ENCODE measurements at regions of chr4 and their contacts with region 1.

Region 1: DNA sequence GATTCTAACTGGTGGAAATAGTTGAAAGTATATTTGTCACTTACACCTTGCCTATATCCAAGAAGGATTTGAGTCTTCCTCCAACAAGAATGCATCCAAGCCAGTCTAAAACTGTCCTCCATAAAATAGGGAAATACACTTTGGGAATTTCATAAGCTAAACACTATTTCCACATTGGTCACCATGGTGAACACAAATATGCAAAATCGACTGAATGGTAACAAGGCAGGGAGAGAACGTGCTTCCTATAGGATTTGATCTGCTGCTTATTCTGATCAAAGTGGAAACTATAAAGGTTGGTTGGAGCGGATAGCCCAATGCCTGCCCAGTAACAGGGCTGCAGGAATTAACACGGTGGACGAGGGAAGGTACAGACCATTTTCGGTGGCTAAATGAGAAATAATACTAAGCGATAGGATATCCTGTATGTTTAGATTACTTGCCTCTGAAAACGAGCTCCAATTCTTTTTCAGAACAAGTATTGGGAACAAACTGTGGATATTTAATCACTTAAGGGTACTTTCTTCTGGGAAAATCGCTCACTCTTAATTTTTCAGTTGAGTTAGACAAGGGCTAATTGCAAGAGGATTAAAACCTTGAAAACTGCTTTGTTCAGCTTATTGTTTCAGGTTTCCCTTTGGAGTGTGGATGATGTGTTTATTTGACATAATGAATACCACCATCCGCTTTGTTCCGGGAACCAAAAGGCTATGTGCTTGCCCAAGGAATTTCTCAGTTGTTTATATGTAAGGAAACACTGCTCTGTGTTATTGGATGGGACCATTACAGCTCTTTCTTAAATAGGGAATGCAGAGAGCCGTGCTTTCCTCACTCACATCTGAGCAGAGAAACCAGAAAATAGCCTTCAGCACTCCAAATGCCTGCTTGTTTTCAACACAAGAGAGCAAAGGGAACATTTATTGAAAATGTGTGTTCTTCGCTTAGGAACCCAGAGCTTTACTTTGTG is 194.4 kb downstream of the CBR4 start:
- DNase-seq: no peak
- H3K4me3 ChIP-seq: peak overlapping the region in 1 of 2 donors; percentile 18
- H3K27ac ChIP-seq: peak overlapping the region; percentile 89 to 92
- H3K4me1 ChIP-seq: no peaks in the 10 kb centered on the region
- H3K27me3 ChIP-seq: no peaks in the 10 kb centered on the region
- CTCF ChIP-seq: no peak
- POLR2A ChIP-seq: no peak

Region 2: DNA sequence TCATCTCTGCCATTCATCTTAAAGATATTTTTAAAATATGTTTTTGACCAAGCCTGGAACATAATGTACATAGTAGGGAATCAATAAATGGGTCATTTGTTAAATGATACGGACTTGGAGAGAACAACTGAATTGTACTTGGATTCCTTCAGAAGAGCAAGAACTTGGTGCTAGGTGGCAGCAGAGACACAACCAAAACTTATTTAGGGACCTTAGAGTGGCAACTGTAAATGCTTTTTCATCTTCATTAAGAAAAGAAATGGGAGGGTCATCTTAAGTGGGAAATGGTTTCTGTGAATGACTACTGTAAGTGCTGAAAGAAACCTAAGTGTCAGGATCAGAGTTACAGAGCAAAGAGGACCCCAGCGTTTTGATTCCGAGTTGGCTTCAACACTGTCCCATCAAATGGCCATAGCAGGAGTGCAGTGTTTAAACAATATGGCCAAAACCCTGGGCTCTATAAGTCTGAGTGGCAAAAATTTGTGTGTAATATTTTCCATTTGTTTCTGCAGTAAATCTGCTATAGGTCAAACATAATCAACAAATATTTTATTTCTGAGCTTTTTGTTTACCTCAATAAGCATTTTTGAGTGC is 105.2 kb before region 1 on chr4:
- intact Hi-C with region 1: loop called (anchors 10 kb)
- DNase-seq: peak; percentile 49 to 64
- H3K4me3 ChIP-seq: no peak overlapping the region
- H3K27ac ChIP-seq: peak overlapping the region; percentile 74 to 76
- H3K4me1 ChIP-seq: peaks cover 0 to 3% of the 10 kb centered on the region in 2 donors
- H3K27me3 ChIP-seq: no peaks in the 10 kb centered on the region
- CTCF ChIP-seq: peak; percentile 59 to 82 (median 70)
- POLR2A ChIP-seq: no peak

Measured in uterus (tissue), 4 donors.